ENCODE measurements at regions of chr18 and their contacts with region 1.

Region 1: GRCh38 chr18:58748899-58749595 is 77.8 kb downstream of the MALT1 start:
- DNase-seq: no peak
- ATAC-seq: peak; percentile 40; the same call in 2 of the 3 replicates
- H3K4me3 ChIP-seq: no peak overlapping the region
- H3K27ac ChIP-seq: no peak overlapping the region
- H3K4me1 ChIP-seq: no peaks in the 10 kb centered on the region
- H3K27me3 ChIP-seq: no peaks in the 10 kb centered on the region
- CTCF ChIP-seq: no peak
- EP300 ChIP-seq: no peak
- POLR2A ChIP-seq: no peak
- RAD21 ChIP-seq: no peak

Region 2: DNA sequence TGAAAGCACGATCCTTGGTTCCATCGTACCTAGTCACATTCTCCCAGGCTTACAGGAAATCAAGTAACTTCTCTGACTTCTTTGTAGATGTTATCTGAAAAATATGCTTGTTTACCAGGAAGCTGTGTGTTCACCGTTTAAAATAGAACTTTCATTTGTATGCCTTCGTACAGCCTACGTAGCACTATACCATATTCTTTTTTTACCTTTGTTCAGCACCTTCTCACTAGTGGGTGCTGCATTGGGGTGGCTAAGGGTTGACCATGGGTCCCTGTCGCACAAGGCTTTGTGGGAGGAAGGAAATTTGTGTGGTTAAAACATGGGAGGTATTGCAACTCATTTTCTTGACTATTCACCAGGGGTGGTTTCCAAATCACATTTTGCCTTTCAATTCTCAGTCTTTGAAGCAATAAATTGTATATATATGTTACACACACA is 61.2 kb before region 1 on chr18:
- CTCF ChIA-PET with region 1: no interaction called
- POLR2A ChIA-PET with region 1: no interaction called
- RAD21 ChIA-PET with region 1: no interaction called
- SMC1A ChIA-PET with region 1: no interaction called
- in situ Hi-C with region 1: no loop called
- intact Hi-C with region 1: loop called (anchors 5 kb)
- DNase-seq: peak; percentile 73
- ATAC-seq: peak; percentile 93
- H3K4me3 ChIP-seq: no peak overlapping the region
- H3K27ac ChIP-seq: peak overlapping the region; percentile 78
- H3K4me1 ChIP-seq: peaks cover 10% of the 10 kb centered on the region
- H3K27me3 ChIP-seq: no peaks in the 10 kb centered on the region
- CTCF ChIP-seq: no peak
- EP300 ChIP-seq: peak in 1 of 2 experiments; percentile 46; a peak in 1 of 4 replicates
- POLR2A ChIP-seq: no peak
- RAD21 ChIP-seq: 0 out of 2 replicates have a peak, but pooled peaks have one; percentile 20

Region 3: GRCh38 chr18:58699551-58699950 is 49.5 kb before region 1 on chr18:
- CTCF ChIA-PET with region 1: no interaction called
- POLR2A ChIA-PET with region 1: no interaction called
- RAD21 ChIA-PET with region 1: no interaction called
- SMC1A ChIA-PET with region 1: interaction called, 4 read pairs
- in situ Hi-C with region 1: no loop called
- intact Hi-C with region 1: loop called (anchors 5 kb)
- DNase-seq: no peak
- ATAC-seq: no peak
- H3K4me3 ChIP-seq: no peak overlapping the region
- H3K27ac ChIP-seq: no peak overlapping the region
- H3K4me1 ChIP-seq: no peaks in the 10 kb centered on the region; the same call in 1 of the 2 replicates
- H3K27me3 ChIP-seq: no peaks in the 10 kb centered on the region
- CTCF ChIP-seq: no peak
- EP300 ChIP-seq: no peak
- POLR2A ChIP-seq: no peak
- RAD21 ChIP-seq: no peak